WTC11 (cell line): ENCODE measurements at regions of chr20 and their contacts with region 1.

Region 1: DNA sequence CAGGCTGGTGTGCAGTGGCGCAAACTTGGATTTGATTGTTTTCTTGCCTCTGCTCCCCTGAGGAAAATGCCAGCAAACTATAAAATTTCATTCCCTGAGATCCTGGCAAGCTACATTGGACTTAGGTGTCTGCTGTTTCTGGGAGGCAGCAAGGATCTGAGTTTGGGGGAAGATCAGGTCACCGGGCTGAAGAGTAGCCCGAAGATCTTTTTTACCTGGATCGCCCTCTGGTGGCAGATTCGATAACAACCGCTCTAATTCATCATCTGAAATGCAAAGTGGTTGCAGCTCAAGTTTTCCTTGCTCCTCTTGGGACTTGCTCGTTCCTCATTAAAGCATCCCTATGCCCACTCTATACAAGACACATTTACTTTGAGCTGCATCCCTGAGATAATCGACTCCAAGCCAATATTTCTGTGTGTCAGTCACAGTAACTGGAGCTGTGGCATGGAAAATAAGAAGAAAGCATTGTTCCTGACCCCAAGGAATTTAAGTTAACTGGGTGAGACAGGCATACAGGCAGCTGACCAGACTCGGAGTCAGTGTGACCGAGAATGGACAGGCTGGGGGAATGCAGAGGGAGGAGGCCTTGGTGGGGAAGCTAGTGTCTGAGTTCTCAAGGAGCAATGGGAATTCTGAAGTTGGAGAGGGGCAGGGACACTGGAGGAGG is 131.8 kb upstream of the PROKR2 start:
- DNase-seq: peak; percentile 82
- ATAC-seq: peak; percentile 91
- H3K4me3 Mint-ChIP-seq: no peak overlapping the region
- H3K27ac Mint-ChIP-seq: peak overlapping the region; percentile 35; the same call in 1 of the 2 replicates
- H3K4me1 Mint-ChIP-seq: peaks cover 20% of the 10 kb centered on the region
- H3K27me3 Mint-ChIP-seq: no peaks in the 10 kb centered on the region; the same call in 1 of the 2 replicates
- CTCF ChIP-seq: peak; percentile 68

Region 2: GRCh38 chr20:5342021-5342420 is 106.6 kb before region 1 on chr20:
- CTCF ChIA-PET with region 1: no interaction called
- POLR2A ChIA-PET with region 1: no interaction called
- DNase-seq: no peak
- ATAC-seq: no peak
- H3K4me3 Mint-ChIP-seq: no peak overlapping the region
- H3K27ac Mint-ChIP-seq: no peak overlapping the region
- H3K4me1 Mint-ChIP-seq: no peaks in the 10 kb centered on the region
- H3K27me3 Mint-ChIP-seq: peaks cover 3% of the 10 kb centered on the region
- CTCF ChIP-seq: no peak

Region 3: DNA sequence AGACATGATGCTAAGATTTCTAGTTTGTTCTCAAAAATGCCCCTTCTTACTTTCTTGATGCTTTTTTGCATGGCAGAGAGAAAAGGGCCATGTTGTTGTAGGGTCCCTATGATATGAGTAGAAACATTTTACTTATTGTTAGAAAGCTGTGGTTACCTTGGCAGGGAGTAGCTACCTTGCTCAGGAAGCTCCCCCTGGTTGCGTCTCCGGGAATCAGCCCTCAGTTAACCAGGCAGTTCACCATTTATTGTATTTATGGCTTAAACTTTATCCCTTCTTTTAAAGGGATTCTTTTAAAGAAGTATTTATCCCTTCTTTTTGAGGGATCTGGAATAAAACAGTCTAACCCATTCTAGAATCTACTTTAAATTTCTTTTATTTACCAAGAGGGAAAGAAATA is 17.9 kb before region 1 on chr20:
- CTCF ChIA-PET with region 1: interaction called, 34 read pairs
- POLR2A ChIA-PET with region 1: no interaction called
- DNase-seq: no peak
- ATAC-seq: peak; percentile 50
- H3K4me3 Mint-ChIP-seq: no peak overlapping the region
- H3K27ac Mint-ChIP-seq: no peak overlapping the region
- H3K4me1 Mint-ChIP-seq: no peaks in the 10 kb centered on the region
- H3K27me3 Mint-ChIP-seq: no peaks in the 10 kb centered on the region
- CTCF ChIP-seq: no peak